ENCODE measurements at regions of chr11 and their contacts with region 1.

Region 1: DNA sequence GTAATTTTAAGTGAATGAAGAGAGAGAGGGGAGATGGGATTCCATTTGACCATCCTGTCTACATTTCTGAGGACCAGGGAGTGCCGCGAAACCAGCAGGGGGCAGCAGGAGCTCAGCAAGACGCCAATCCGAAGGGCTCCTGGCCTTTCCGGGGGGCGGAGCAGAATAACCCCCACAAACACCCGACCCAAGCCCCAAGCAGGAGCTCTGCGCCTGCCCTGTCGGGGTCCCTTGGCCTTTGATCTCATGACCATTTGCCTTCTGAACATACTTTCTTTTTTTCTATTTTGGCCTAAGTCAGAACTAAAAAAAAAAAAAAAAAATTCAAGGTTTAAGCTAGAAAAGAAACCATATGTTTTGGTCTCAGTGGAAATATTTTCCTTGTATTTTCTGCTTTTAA is 21.9 kb upstream of the SCN2B start:
- H3K4me3 ChIP-seq: no peak overlapping the region; the same call in 1 of the 2 replicates
- H3K27ac ChIP-seq: no peak overlapping the region
- H3K4me1 ChIP-seq: no peaks in the 10 kb centered on the region
- CTCF ChIP-seq: peak; percentile 54

Region 2: DNA sequence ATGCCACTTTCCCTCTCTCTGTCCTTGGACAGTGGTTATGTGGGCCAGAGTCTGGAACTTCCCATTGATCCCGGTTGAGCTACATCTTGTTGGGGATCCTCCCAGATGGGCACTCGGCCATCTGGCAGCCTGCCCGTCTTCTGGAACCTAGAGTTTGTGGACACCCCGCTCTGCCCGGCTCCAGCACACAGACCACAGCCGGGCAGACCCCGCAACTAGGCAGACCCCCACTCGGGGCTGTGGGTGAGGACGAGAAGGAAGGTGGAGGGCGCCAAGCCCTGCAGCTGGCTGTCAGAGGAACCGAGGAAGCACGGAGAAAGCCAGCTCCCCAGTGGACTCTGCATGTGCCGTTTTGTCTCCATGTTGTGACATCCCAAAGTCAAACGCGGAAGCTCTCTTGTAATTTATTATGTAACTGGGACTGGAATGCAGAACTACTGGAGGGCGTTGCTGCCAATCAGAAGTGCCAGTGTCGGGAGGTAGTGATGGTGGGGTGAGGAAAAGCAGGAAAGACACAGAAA is 663.0 kb before region 1 on chr11:
- CTCF ChIA-PET with region 1: no interaction called
- POLR2A ChIA-PET with region 1: no interaction called
- H3K4me3 ChIP-seq: no peak overlapping the region
- H3K27ac ChIP-seq: no peak overlapping the region
- H3K4me1 ChIP-seq: no peaks in the 10 kb centered on the region
- CTCF ChIP-seq: no peak

Region 3: DNA sequence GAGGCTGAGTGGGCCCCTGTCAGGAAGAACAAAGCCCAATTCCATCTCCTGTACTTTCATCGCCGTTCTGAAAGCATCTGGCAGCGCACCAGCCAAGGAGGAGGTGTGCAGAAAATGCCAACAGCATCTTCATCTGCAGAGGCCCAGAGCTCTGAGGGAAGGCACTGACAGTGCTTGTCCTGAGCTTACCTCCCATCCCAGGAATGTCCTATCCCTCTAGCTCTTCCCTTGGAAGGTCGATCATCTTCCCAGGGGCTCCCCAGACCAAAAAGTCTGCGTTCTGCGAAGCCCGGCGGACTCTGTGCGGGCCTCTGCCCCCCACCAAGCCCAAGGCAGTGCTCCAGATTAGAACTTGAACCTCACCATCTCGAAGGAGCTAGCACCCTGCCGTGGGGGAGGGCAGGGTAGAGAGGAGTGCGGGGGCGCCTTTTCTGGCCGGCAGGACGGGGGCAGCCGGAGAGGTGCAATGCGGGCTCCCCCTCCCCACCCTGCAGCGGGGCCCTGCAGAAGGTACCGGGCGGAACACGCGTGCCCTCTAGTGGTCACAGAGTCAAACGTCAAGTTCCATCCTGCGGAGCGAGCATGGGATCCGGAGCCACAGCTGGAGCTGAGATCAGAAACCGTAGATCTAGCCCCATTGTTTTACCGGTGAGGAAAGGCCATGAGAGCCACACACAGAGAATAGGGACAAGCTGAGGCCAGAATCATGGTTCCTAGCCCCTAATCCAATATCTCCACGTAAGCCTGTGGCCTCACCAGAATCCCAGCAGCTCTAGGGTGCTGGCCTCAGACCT is 26.9 kb before region 1 on chr11:
- CTCF ChIA-PET with region 1: interaction called, 13 read pairs
- POLR2A ChIA-PET with region 1: no interaction called
- H3K4me3 ChIP-seq: no peak overlapping the region
- H3K27ac ChIP-seq: no peak overlapping the region
- H3K4me1 ChIP-seq: no peaks in the 10 kb centered on the region
- CTCF ChIP-seq: peak; percentile 80

Region 4: DNA sequence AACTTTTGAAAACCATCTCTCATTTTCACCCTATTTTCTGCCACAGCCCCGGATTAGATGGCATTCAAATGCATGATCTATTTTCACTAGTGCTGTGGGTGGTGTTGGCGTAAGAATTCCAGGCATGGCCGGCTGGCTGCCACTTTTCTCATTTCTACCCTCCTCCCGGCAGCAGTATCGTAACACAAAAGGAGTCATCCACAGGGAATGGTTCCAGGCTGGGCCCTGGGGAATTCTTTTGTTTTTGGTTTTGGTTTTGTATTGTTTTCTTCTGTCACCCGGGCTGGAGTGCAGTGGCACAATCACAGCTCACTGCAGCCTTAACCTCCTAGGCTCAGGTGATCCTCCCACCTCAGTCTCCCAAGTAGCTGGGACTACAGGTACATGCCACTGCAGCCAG is 12.6 kb after region 1 on chr11:
- CTCF ChIA-PET with region 1: interaction called, 31 read pairs
- POLR2A ChIA-PET with region 1: no interaction called
- H3K4me3 ChIP-seq: no peak overlapping the region
- H3K27ac ChIP-seq: no peak overlapping the region
- H3K4me1 ChIP-seq: no peaks in the 10 kb centered on the region
- CTCF ChIP-seq: no peak

Region 5: DNA sequence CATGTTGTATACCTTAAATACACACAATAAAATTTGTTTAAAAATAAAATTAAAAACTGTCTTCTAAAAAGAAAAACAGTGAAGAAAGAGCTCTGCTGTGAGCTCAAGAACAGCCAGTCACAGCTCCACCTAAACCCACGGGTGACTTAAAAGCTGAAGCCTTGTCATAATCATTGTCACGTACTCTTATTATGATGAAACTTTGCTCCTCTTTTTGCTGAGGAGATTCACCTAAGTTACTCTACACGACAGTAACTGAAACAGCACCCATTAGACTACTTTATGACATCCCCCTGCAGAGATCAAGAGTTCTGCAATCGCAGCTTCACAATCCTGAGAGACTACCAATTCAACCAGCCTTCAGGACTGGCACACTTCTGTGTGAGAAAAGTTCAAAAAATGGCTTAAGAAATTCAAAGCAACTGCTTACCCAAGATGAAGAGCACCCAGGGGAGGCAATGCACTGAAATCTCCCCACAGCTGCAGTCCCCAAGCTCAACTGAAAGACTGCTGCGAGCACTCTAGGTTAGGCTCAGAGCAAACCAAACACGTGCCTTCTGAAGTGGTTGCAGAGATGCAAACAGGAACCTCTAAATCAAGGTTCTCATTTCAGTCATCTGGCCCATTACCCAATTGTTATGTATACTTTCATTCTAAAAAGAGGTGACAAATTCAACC is 26.3 kb after region 1 on chr11 and contains the start of gene JAML:
- CTCF ChIA-PET with region 1: interaction called, 15 read pairs
- POLR2A ChIA-PET with region 1: no interaction called
- H3K4me3 ChIP-seq: no peak within 1 kb of the TSS
- H3K27ac ChIP-seq: no peak within 1 kb of the TSS
- H3K4me1 ChIP-seq: no peaks in the 10 kb centered on the region
- CTCF ChIP-seq: no peak

Region 6: GRCh38 chr11:118267486-118267885 is 69.1 kb after region 1 on chr11:
- CTCF ChIA-PET with region 1: no interaction called
- POLR2A ChIA-PET with region 1: no interaction called
- H3K4me3 ChIP-seq: no peak overlapping the region
- H3K27ac ChIP-seq: no peak overlapping the region
- H3K4me1 ChIP-seq: no peaks in the 10 kb centered on the region
- CTCF ChIP-seq: no peak

Region 7: DNA sequence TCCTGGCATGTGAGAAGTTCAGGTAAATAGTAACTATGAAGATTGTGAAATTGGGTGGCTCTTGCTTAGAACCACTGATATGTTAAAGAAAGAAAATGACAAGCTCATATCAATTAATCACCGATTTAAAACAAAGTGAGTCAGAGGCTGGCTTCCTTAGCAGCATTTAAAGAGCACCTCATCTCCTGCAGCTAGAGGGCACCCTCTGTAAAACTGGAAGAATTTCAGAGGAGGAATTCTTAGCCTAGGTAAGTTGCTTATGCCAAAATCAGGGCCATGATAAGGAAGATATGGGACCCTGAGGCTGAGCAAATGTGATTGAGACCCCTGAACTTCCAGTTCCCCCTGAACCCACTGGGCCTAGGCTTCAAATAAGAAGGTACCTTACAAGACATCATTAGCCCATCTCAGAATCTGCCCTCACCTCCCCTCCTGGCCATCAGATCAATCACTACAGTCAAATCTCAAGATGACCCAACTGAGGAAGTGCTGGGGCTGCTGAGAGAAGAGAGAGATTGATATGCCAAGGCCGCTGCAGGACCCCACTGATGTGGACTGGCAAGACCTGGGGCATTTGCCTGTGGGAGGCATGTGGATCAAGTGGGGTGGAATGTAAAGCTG is 97.6 kb after region 1 on chr11:
- CTCF ChIA-PET with region 1: interaction called, 25 read pairs
- POLR2A ChIA-PET with region 1: no interaction called
- H3K4me3 ChIP-seq: no peak overlapping the region
- H3K27ac ChIP-seq: no peak overlapping the region
- H3K4me1 ChIP-seq: no peaks in the 10 kb centered on the region
- CTCF ChIP-seq: no peak

Region 8: DNA sequence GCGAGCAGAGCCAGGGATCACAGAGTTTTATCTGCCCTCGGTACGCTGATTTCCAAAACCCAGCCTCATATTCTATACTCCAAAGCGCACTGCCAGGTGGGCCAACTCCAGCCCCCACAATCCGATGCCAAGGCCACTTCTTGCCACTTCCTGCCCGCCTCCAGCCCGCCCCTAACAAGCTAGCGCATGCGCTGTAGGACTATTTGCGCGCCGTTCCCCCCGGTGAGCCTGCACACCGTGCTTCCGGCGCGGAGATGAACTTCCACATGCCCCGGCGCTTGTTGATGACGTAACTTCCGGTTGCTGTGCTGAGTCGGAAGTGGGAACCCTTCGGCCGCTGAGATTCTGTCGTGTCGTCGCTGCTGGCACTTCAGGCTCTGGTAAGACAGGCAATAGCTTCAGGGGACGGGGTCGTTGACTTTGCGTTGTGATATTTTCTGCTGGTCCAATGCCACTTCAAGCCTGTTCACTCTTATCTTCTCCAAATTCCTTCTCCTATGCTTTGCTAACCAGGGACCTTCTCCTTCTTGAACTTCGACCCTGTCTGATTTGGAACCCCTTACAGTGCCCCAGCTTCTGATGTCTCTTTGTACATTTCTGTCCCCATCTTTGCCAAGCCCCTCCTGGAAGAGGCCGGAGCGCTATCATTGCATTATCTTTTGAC is 161.1 kb after region 1 on chr11 and contains the start of gene UBE4A:
- CTCF ChIA-PET with region 1: interaction called, 52 read pairs
- POLR2A ChIA-PET with region 1: no interaction called
- H3K4me3 ChIP-seq: peak within 1 kb of the TSS; percentile 53
- H3K27ac ChIP-seq: no peak within 1 kb of the TSS
- H3K4me1 ChIP-seq: 0 out of 2 replicates have a peak, but pooled peaks cover 2% of the 10 kb centered on the region
- CTCF ChIP-seq: no peak

Measured in HEK293 (cell line).